ENCODE measurements at regions of chr2 and their contacts with region 1.

Region 1: GRCh38 chr2:186641807-186642321 is 52.0 kb upstream of the FAM171B start:
- DNase-seq: no peak
- H3K4me3 ChIP-seq: no peak overlapping the region
- H3K27ac ChIP-seq: no peak overlapping the region
- H3K4me1 ChIP-seq: peaks cover 0 to 5% (median 2%) of the 10 kb centered on the region in 4 donors
- H3K27me3 ChIP-seq: no peaks in the 10 kb centered on the region
- CTCF ChIP-seq: peak; percentile 62 to 78 (median 73)
- EP300 ChIP-seq: no peak
- POLR2A ChIP-seq: no peak

Region 2: DNA sequence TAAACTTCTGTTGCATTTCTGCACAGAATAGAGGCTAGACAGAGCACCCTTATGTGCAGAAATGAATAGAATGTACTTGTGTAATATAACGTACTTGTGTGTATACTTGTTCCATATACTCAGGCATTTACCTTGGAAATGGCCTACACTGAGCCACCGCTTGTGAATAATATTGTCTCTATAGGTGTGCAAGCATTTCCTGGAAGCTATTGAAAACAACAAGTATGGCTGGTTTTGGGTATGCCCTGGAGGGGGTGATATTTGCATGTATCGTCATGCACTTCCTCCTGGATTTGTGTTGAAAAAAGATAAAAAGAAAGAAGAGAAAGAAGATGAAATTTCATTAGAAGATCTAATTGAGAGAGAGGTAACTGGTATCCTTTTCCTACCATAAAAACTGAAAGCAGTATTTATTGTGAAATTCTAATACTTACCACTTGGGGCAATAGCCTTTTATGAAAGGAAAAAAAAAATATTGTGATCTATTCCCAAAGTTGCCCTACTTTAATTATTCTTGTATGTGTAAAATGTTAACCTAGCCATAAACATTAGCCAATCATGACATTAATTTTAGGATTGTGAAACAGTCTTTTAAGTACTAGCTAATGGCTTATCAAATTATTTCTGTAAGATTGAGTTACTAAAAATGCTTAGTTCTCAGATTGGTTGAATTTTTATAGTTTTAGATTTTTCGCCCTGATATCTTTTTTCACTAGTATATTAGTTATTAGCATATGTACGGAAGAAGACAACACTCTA is 137.8 kb before region 1 on chr2:
- intact Hi-C with region 1: loop called (anchors 1 kb)
- DNase-seq: no peak
- H3K4me3 ChIP-seq: no peak overlapping the region
- H3K27ac ChIP-seq: no peak overlapping the region
- H3K4me1 ChIP-seq: peaks cover 0 to 11% (median 4%) of the 10 kb centered on the region in 4 donors
- H3K27me3 ChIP-seq: no peaks in the 10 kb centered on the region
- CTCF ChIP-seq: peak; percentile 61 to 64 (median 62)
- EP300 ChIP-seq: no peak
- POLR2A ChIP-seq: no peak

Region 3: DNA sequence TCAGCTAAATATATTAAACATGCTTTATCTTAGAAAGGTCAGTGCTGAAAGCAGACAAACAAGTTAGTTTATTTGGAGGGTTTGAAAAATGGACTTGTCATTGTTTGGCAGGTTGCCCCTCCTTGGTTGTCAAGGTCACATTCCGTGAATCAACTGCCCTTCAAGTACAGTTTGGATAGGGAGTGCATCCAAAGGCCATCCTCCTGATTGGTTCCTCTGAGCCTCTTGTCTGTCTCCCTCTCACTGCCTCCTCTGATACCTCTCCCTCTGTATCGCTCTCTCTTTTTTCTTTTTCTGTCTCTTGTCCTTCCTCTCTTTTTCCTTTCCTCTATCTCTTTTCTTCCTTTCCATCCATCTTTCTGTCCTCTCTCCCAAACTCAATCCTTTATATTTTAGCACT is 46.6 kb before region 1 on chr2:
- intact Hi-C with region 1: loop called (anchors 5 kb)
- DNase-seq: no peak
- H3K4me3 ChIP-seq: no peak overlapping the region
- H3K27ac ChIP-seq: peak overlapping the region; percentile 21 to 64 (median 46)
- H3K4me1 ChIP-seq: peaks cover 29 to 85% (median 80%) of the 10 kb centered on the region in 4 donors
- H3K27me3 ChIP-seq: no peaks in the 10 kb centered on the region
- CTCF ChIP-seq: no peak
- EP300 ChIP-seq: no peak
- POLR2A ChIP-seq: no peak

Region 4: GRCh38 chr2:186879312-186879711 is 237.4 kb after region 1 on chr2:
- intact Hi-C with region 1: no loop called
- DNase-seq: no peak
- H3K4me3 ChIP-seq: no peak overlapping the region
- H3K27ac ChIP-seq: no peak overlapping the region
- H3K4me1 ChIP-seq: no peaks in the 10 kb centered on the region
- H3K27me3 ChIP-seq: no peaks in the 10 kb centered on the region
- CTCF ChIP-seq: no peak
- EP300 ChIP-seq: no peak
- POLR2A ChIP-seq: no peak

Measured in esophagus muscularis mucosa (tissue), 4 donors.